ENCODE measurements at regions of chr4 and their contacts with region 1.

Region 1: DNA sequence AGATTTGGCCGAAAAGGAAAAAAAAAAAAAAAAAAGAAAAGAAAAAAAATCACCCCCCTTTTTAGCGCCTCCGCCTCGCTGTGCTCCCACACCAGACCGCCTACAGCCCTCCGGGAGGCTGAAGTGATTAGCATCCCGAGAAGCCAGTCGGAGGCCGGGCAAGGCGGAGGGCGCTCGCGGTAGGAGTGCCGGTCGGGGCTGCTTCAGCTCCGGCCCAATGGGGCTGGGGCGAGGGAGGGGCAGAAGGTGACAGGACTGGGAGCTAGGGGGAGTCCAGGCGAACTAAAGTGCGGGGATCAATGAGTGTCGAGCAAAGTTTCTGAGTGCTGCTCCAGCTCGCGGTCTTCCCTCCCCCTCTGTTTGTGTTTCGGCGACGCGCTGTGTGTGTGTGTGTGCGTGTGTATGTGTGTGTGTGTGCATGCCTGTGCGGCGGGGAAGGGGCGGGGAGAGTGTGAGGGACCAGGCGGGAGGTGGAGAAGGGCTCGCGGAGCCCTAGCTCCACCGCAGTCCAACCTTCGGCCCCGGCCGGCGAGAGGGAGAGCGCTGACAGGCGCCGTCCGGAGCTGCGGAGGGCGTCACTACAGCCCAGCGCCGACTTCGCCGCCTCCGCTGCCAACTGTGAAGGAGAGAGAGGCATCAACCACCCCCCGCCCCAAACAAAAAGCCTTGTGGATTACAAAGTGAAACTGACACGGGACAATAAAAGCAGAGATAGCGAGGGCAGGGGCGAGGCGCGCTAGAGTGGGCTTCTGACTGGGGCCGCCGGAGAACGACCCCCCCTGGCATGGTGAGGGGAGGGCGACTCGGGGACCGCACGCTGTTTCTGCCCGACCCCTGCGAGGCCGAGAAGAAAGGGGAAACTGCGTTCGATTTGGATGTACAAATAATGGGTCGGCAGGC is at the start of gene FAT4:
- DNase-seq: peak; percentile 89
- H3K4me3 Mint-ChIP-seq: peak within 1 kb of the TSS; percentile 96
- H3K27ac Mint-ChIP-seq: peak within 1 kb of the TSS; percentile 54
- H3K4me1 Mint-ChIP-seq: no peaks in the 10 kb centered on the region
- H3K27me3 Mint-ChIP-seq: no peaks in the 10 kb centered on the region
- CTCF ChIP-seq: no peak
- total RNA-seq, gene FAT4: 4.6 and 4.7 TPM in 2 replicates

Region 2: DNA sequence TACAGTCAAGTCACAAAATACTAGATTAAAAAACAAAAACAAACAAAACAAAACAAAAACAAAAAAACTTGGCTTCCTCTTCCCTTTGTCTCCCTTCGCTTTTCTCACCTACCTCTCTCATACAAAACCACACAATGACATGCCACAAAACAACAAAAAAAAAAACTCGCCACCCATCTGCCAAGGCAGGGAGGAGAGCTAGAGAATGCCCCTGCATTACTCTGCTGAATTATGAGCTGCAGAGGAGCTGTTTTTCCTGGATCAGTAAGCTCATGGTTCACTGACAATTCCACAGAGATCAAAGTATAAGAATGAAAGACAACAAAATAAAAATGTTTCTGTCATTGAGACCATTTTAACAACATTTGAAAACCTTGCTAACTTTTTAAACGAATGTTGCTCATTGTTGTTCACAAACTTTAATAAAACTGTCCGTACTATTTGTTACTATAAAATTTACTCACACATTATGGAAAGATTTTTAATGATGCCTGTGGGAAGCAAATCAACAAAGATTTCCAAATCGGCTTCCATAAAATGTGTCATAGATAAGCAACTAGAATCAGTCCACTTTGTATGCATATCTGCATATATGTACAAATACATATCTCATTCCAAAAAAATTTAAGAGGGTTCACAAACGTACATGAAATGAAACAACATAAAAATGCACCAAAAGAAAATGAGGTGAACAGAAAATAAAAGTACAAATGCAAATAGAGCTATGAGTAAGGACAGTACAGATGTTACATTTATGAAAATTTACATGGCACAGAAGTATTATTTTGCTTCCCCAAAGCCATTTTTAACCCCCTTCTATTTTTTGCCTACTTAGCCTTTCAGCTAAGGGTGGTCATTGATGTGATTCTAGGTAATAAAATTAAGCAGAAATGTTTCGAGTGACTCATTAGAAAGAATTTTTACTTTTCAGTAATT is 252.5 kb before region 1 on chr4:
- CTCF ChIA-PET with region 1: no interaction called
- intact Hi-C with region 1: no loop called
- DNase-seq: no peak
- H3K4me3 Mint-ChIP-seq: no peak overlapping the region
- H3K27ac Mint-ChIP-seq: no peak overlapping the region
- H3K4me1 Mint-ChIP-seq: no peaks in the 10 kb centered on the region
- H3K27me3 Mint-ChIP-seq: no peaks in the 10 kb centered on the region
- CTCF ChIP-seq: no peak

Region 3: GRCh38 chr4:125389713-125390112 is 74.8 kb after region 1 on chr4:
- CTCF ChIA-PET with region 1: no interaction called
- intact Hi-C with region 1: loop called (anchors 5 kb)
- DNase-seq: no peak
- H3K4me3 Mint-ChIP-seq: no peak overlapping the region
- H3K27ac Mint-ChIP-seq: peak overlapping the region; percentile 52
- H3K4me1 Mint-ChIP-seq: peaks cover 14% of the 10 kb centered on the region
- H3K27me3 Mint-ChIP-seq: no peaks in the 10 kb centered on the region
- CTCF ChIP-seq: no peak

Region 4: DNA sequence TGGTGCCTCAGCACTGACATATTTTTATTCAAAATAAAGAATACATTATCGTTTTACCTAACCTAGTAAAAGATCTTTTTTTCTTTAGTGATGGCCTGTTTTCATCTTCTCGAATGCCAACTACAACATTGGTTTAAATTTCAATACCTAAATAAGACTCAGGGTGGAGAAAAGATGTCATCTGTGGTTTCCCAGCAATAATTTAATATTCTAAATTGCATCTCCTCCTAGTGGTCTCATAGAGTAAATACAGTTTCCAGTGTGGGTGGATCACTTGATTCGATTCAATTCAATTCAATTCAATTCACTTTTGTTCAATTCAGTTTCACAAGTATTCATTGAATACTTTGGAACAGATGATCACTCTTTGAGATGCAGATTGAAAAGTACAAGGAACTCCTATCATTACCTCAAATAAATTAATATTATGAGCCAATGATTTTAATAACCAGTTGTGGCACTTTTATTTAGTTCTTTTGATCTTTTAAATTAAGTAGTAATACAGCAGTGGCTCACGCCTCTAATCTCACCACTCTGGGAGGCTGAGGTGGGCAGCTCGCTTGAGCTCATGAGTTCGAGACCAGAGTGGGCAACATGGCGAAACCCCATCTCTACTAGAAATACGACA is 427.0 kb after region 1 on chr4:
- CTCF ChIA-PET with region 1: no interaction called
- intact Hi-C with region 1: loop called (anchors 2 kb)
- DNase-seq: no peak
- H3K4me3 Mint-ChIP-seq: no peak overlapping the region
- H3K27ac Mint-ChIP-seq: no peak overlapping the region
- H3K4me1 Mint-ChIP-seq: no peaks in the 10 kb centered on the region
- H3K27me3 Mint-ChIP-seq: no peaks in the 10 kb centered on the region
- CTCF ChIP-seq: peak; percentile 42

Region 5: DNA sequence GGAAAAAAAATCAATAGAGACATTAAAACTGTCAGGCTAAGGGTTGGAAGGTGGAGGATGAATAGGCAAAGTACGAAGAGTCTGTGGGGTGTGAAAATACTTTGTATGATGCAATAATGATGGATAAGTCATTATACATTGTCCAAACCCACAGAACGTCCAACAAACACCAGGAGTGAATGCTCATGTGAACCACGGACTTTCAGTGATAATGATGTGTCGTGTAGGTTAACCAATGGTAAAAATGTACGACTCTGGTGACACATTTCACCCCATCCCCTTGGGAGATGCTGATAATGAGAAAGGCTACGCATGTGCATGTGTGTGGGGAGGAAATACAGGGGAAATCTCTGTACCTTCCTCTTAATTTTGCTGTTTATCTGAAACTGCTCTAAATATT is 665.0 kb after region 1 on chr4:
- CTCF ChIA-PET with region 1: no interaction called
- intact Hi-C with region 1: loop called (anchors 10 kb)
- DNase-seq: no peak
- H3K4me3 Mint-ChIP-seq: no peak overlapping the region
- H3K27ac Mint-ChIP-seq: no peak overlapping the region
- H3K4me1 Mint-ChIP-seq: peaks cover 8% of the 10 kb centered on the region
- H3K27me3 Mint-ChIP-seq: no peaks in the 10 kb centered on the region
- CTCF ChIP-seq: no peak

Region 6: GRCh38 chr4:126405369-126405982 is 1090.5 kb after region 1 on chr4:
- CTCF ChIA-PET with region 1: no interaction called
- intact Hi-C with region 1: loop called (anchors 5 kb)
- DNase-seq: no peak
- H3K4me3 Mint-ChIP-seq: no peak overlapping the region
- H3K27ac Mint-ChIP-seq: no peak overlapping the region
- H3K4me1 Mint-ChIP-seq: no peaks in the 10 kb centered on the region
- H3K27me3 Mint-ChIP-seq: no peaks in the 10 kb centered on the region
- CTCF ChIP-seq: no peak